ENCODE measurements at regions of chr12 and their contacts with region 1.

Region 1: GRCh38 chr12:80837348-80837985 is 100.3 kb downstream of the LIN7A start:
- DNase-seq: no peak
- ATAC-seq: peak; percentile 90

Region 2: GRCh38 chr12:80912901-80913694 is 75.6 kb after region 1 on chr12:
- intact Hi-C with region 1: no loop called
- DNase-seq: no peak
- ATAC-seq: no peak

Region 3: GRCh38 chr12:80941916-80942315 is 104.4 kb after region 1 on chr12:
- intact Hi-C with region 1: loop called (anchors 5 kb)
- DNase-seq: no peak
- ATAC-seq: no peak

Region 4: GRCh38 chr12:81268664-81268926 is 431.1 kb after region 1 on chr12:
- intact Hi-C with region 1: no loop called
- DNase-seq: no peak
- ATAC-seq: no peak

Measured in Right ventricle myocardium superior (tissue), 1 donor.